ENCODE measurements at regions of chr6 and their contacts with region 1.

Region 1: DNA sequence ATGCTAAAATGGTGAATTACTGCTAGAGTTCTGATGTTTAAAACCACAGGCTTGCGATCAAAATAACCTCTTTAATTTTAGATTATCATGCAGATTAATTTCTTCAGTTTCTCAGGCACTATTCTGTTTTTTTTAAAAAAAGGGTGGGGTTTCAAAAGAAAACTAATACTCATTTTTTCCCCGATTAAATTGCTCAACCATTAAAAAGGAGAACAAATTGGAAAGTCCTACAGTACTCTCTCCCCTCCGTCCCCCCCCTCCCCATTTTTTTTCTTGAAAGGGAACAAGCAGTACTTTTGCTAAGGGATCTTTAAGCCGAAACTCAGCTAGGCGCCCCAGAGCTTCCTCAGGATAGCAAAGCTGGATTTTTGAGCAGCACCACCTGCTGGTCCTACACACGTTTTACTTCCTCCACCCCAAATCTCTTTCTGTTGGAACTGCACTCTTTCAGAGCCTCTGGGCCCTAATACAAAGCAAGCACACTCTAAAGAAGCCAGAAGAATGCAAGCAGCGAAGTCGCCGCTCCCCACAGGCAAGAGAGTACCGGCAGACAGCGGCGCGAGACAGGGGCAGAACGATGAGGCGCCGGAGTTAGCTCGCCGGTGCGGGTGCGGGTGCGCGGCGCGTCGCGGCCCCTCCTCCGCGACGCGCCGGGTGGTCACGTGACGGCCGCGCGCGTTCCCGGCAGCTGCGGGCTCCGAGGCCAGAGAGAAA is at the start of gene RNF146:
- DNase-seq: peak; percentile 93
- total RNA-seq, gene RNF146: 72.8 TPM

Region 2: DNA sequence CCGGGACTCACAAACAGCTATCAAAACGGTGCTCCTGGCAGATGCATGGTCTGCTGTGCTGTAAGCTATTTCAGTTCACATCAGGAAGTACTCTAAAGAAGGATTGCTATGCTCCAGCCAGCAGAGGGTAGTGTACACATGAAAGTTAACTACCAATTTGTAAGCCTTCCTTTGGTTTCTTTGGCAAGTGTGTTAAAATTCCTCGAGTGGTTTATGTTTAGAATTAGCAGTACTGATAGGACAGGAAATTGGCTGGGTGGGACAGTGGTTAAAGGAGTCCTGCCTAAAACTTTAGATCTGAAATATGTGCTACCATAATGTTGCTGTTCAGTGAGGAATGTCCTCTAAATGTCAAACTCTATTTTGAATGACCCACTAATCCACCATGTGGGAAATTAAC is 1232.6 kb before region 1 on chr6:
- intact Hi-C with region 1: loop called (anchors 10 kb)
- DNase-seq: no peak

Region 3: GRCh38 chr6:127100510-127101140 is 165.7 kb before region 1 on chr6:
- intact Hi-C with region 1: no loop called
- DNase-seq: no peak

Region 4: DNA sequence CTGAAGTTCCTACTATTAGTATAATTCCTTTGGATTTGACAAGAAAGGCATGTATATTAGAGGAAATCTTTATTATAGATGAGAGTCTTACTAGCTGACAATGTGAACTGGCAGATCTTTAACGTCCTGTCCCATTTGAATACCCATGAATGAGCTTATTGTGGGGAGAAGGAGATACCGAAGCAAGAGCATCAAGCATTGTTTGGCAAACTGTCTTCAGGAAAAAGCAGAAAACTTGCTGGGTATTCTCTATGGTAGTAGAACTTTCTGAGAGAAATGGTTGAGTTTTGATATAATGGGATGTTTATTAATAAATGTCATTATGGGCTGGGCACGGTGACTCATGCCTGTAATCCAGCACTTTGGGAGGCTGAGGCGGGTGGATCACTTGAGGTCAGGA is 129.5 kb before region 1 on chr6:
- intact Hi-C with region 1: no loop called
- DNase-seq: no peak

Region 5: GRCh38 chr6:127191716-127192115 is 74.6 kb before region 1 on chr6:
- intact Hi-C with region 1: loop called (anchors 1 kb)
- DNase-seq: no peak

Region 6: DNA sequence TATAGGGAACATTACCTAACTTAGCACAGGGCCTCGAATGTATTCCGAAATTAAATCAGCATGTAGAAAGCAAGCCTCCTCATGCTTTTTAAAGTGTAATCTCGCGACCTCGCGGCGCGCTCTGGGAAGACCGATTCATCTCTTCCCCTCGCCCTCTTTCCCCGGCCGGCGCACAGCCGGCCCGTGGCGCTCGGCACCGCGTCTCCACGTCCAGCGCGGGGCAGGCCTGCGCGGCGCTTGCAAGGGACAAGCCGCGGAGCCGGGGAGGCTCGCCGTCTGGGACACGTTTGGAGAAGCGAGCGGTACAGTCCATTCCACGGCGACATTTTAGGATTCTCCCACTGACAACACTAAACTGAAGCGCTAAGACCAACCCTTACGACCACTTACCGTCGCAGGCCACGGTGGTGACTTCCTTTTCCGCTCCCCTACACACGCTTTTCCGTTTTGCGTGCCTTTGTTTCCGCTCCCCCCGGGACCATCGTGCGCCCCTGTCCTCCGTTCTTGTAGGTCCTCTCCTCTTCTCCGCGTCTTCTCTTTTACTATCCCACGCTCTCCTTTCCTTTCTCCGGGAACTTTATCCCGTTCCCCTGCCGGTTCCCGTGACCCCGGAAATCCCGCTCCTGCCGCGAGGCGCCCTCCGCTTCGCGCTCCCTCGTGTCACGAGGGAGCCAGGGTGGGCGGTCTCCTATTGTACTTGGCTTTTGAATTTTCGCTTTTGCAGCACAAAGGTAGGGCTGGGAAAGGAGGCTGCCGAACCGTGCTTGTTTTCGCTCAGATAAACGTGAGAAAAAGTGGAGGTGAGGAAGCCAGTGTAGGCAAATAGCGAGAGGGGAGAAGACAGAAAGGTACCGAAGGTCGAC is 76.8 kb after region 1 on chr6 and contains the start of gene ECHDC1:
- intact Hi-C with region 1: loop called (anchors 2 kb)
- DNase-seq: peak; percentile 86
- total RNA-seq, gene ECHDC1: 34.4 TPM

Region 7: GRCh38 chr6:127690092-127690491 is 423.8 kb after region 1 on chr6:
- intact Hi-C with region 1: no loop called
- DNase-seq: no peak